Heart left ventricle (tissue), 16 donors: ENCODE measurements at regions of chr9 and their contacts with region 1.

Region 1: GRCh38 chr9:6584881-6585597 is 60.5 kb downstream of the GLDC start:
- DNase-seq: no peak
- ATAC-seq: no peak
- H3K4me3 ChIP-seq: no peak overlapping the region
- H3K27ac ChIP-seq: no peak overlapping the region
- H3K4me1 ChIP-seq: peaks cover 0 to 4% (median 0%) of the 10 kb centered on the region in 12 donors
- H3K27me3 ChIP-seq: peaks cover 0 to 6% (median 0%) of the 10 kb centered on the region in 9 donors
- CTCF ChIP-seq: peak; percentile 30 to 67 (median 47)
- POLR2A ChIP-seq: no peak

Region 2: GRCh38 chr9:6498982-6499381 is 86.1 kb before region 1 on chr9:
- intact Hi-C with region 1: loop called in 1 of 10 experiments (anchors 10 kb)
- DNase-seq: no peak
- ATAC-seq: no peak
- H3K4me3 ChIP-seq: no peak overlapping the region
- H3K27ac ChIP-seq: no peak overlapping the region
- H3K4me1 ChIP-seq: peaks cover 0 to 6% (median 0%) of the 10 kb centered on the region in 12 donors
- H3K27me3 ChIP-seq: no peaks in the 10 kb centered on the region
- CTCF ChIP-seq: no peak
- POLR2A ChIP-seq: no peak

Region 3: GRCh38 chr9:6667633-6668280 is 82.7 kb after region 1 on chr9:
- intact Hi-C with region 1: loop called in 7 of 10 experiments (anchors 2 to 10 kb)
- DNase-seq: no peak
- ATAC-seq: no peak
- H3K4me3 ChIP-seq: no peak overlapping the region
- H3K27ac ChIP-seq: no peak overlapping the region
- H3K4me1 ChIP-seq: no peaks in the 10 kb centered on the region
- H3K27me3 ChIP-seq: no peaks in the 10 kb centered on the region
- CTCF ChIP-seq: peak; percentile 25 to 65 (median 48)
- POLR2A ChIP-seq: no peak

Region 4: DNA sequence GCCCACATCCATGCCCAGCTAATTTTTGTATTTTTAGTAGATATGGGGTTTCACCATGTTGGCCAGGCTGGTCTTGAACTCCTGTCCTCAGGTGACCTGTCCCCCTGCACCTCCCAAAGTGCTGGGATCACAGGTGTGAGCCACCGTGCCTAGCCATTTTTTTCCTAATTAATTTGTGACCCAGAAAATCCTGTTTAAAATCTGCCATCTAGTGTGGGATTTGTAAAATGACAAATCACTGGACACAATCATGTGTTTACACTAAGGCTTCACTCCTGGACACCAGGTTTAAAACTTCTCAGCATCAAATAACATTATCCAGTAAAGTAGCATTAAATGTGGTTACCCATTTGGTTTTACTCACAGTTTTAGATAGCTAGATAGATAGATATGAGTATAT is 154.2 kb after region 1 on chr9:
- intact Hi-C with region 1: loop called in 8 of 10 experiments (anchors 2 to 10 kb)
- DNase-seq: no peak
- ATAC-seq: no peak
- H3K4me3 ChIP-seq: no peak overlapping the region
- H3K27ac ChIP-seq: no peak overlapping the region
- H3K4me1 ChIP-seq: no peaks in the 10 kb centered on the region
- H3K27me3 ChIP-seq: peaks cover 0 to 9% (median 0%) of the 10 kb centered on the region in 9 donors
- CTCF ChIP-seq: peak in 7 of 12 donors; percentile 12 to 39 (median 23)
- POLR2A ChIP-seq: no peak

Region 5: DNA sequence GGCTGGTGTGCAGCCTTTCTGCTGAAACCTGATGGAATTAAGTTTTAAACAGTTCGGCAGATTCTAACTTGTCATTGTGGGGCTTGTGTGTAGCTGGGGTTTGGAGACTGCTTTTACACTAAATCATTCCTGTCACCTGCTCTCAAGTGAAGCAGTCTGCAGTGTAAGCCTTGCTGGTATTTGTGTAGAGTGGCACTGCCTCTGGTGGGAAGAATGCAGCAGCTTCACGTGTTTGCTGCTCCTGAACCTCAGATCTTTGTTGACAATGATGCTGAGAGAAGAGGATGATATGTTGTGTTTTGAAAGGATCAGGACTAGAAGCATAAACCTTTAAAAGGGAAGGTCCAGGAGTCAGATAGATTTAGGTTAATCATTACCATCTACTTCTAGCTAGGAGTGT is 260.8 kb after region 1 on chr9:
- intact Hi-C with region 1: loop called in 3 of 10 experiments (anchors 5 to 10 kb)
- DNase-seq: no peak
- ATAC-seq: peak in 3 of 4 donors; percentile 63 to 83 (median 68)
- H3K4me3 ChIP-seq: no peak overlapping the region
- H3K27ac ChIP-seq: no peak overlapping the region
- H3K4me1 ChIP-seq: peaks cover 0 to 12% (median 0%) of the 10 kb centered on the region in 12 donors
- H3K27me3 ChIP-seq: no peaks in the 10 kb centered on the region
- CTCF ChIP-seq: peak in 10 of 12 donors; percentile 23 to 52 (median 36)
- POLR2A ChIP-seq: no peak